Kidney (tissue), 22 donors: ENCODE measurements at regions of chr4 and their contacts with region 1.

Region 1: DNA sequence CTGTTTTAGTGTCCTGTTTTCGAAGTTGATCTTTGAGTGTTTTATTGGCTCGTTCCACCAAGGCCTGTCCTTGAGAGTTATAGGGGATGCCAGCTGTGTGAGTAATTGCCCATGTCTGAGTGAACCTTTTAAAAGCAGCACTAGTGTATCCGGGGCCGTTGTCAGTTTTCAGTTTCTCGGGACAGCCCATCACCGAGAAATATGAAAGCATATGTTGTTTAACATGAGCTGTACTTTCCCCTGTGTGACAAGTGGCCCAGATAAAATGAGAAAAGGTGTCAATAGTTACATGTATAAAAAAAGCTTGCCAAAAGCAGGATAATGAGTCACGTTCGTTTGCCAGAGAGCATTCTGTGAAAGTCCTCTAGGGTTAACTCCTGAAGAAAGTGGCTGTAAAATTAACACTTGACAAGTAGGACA is 48.6 kb upstream of the RASSF6 start:
- DNase-seq: peak in 3 of 5 donors; percentile 76 to 89 (median 85)
- H3K4me3 ChIP-seq: no peak overlapping the region
- H3K27ac ChIP-seq: no peak overlapping the region
- H3K4me1 ChIP-seq: no peaks in the 10 kb centered on the region
- H3K27me3 ChIP-seq: no peaks in the 10 kb centered on the region
- CTCF ChIP-seq: no peak

Region 2: DNA sequence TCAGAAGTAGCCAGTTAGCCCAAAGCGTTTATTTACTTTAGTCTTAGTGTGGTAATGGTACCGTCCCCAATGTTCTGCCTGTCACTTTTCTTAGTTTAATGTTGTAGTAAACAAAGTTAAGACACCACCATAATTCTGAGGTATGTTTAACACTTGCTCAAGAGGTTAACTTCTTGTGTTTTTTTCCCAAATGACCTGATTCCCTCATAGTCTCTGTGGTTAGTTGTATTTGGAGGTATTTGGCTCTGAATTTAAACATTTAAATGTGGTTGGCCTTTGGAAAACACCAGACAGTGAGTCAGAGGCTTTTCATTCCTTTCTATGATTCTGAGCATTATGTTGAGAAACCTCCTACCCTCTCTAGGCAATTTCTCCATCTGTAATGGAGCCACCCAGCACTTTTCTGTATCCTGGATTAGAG is 248.3 kb after region 1 on chr4:
- intact Hi-C with region 1: loop called (anchors 5 kb)
- DNase-seq: no peak
- H3K4me3 ChIP-seq: no peak overlapping the region
- H3K27ac ChIP-seq: no peak overlapping the region
- H3K4me1 ChIP-seq: no peaks in the 10 kb centered on the region
- H3K27me3 ChIP-seq: no peaks in the 10 kb centered on the region
- CTCF ChIP-seq: no peak